AG04449 (cell line): ENCODE measurements at regions of chr7 and their contacts with region 1.

Region 1: DNA sequence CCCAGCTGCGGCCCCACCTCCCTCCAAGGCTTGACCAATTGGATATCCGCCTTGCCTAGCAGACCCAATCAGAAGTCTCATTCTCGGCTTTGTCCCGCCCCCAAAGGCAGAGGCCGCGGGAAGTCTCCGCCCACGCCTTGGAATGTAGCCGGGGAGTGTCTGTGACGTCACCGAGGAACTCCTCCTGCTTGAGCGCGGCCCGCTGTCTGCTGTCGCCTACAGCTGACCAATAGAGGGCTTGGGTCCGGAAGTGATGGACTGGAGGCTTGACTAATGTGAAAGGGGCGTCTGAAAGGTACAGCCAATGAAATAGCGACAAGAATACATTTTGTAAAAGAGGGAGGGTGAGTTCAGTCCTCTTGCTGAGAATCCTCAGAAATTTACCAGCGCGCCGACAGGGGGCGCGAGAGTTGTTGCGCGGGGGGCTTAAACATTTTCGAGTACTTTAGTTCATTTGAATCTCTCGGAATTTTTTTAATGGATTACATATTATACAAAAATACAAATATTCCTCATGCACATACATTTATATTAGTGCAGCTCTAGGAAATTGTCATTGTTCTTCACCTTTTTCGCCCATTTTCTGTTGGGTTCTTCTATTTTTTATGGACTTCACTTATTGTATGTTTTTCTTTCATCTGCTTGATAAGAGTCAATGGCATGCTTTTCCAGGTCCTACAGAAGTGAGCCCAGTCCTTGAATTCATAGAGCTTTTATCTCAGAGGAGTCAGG is 376 bp upstream of the CREB3L2 start:
- DNase-seq: peak; percentile 99
- H3K4me3 ChIP-seq: peak overlapping the region; percentile 97
- CTCF ChIP-seq: peak; percentile 70

Region 2: GRCh38 chr7:137934941-137935883 is 67.0 kb before region 1 on chr7:
- CTCF ChIA-PET with region 1: interaction called, 30 read pairs
- POLR2A ChIA-PET with region 1: interaction called, 4 read pairs
- DNase-seq: no peak
- H3K4me3 ChIP-seq: no peak overlapping the region
- CTCF ChIP-seq: no peak

Region 3: DNA sequence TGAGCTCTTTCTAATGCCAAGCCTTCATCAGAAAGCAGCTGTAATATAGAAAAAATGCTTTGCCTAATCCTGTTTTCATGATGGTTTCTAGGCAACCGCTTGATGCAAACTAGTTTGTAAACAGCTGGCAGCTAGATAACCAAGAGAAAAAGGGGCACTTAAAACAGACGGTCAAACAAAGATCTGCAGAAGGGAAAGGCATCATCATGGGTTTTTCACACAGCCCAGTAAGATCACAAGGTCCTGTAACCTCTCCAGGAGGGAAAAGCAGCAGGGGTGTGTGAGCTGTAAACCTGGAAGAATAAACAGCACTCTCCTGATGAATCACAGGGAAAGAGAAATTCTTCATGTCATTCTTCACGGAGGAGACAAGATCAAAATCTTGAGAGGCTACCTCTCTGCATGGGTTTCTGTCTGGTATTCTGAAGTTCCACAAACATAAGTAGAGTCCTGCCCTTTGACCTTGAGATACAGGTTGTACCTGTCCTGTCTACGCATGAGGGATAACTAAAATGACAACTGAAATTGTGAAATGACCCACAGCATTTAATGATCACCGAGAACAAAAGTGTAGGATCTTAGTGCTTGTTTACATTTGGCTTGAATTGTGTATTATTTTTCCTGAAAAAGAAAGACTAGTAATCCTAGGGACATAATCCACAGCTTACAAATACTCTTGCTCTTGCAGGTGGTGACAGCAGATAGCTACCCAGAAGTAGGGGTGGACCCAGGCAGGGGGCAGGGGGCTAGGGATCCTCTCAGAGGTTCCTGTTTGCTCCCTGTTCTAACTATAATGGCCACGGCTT is 48.4 kb before region 1 on chr7:
- CTCF ChIA-PET with region 1: interaction called, 12 read pairs
- POLR2A ChIA-PET with region 1: interaction called, 5 read pairs
- DNase-seq: no peak
- H3K4me3 ChIP-seq: no peak overlapping the region
- CTCF ChIP-seq: no peak

Region 4: GRCh38 chr7:137985253-137985896 is 16.9 kb before region 1 on chr7:
- CTCF ChIA-PET with region 1: interaction called, 55 read pairs
- POLR2A ChIA-PET with region 1: interaction called, 35 read pairs
- DNase-seq: no peak
- H3K4me3 ChIP-seq: no peak overlapping the region
- CTCF ChIP-seq: no peak